Activated naive CD4-positive, alpha-beta T cell treated with anti-CD3 and anti-CD28 coated beads for 36 hours (primary cell): ENCODE measurements at regions of chr7 and their contacts with region 1.

Region 1: GRCh38 chr7:129271500-129272355 is 46.9 kb downstream of the AHCYL2 start:
- DNase-seq: peak; percentile 84
- H3K4me3 Mint-ChIP-seq: peak overlapping the region; percentile 63
- H3K27ac Mint-ChIP-seq: peak overlapping the region; percentile 73
- H3K4me1 Mint-ChIP-seq: peaks cover 9% of the 10 kb centered on the region
- H3K27me3 Mint-ChIP-seq: no peaks in the 10 kb centered on the region

Region 2: DNA sequence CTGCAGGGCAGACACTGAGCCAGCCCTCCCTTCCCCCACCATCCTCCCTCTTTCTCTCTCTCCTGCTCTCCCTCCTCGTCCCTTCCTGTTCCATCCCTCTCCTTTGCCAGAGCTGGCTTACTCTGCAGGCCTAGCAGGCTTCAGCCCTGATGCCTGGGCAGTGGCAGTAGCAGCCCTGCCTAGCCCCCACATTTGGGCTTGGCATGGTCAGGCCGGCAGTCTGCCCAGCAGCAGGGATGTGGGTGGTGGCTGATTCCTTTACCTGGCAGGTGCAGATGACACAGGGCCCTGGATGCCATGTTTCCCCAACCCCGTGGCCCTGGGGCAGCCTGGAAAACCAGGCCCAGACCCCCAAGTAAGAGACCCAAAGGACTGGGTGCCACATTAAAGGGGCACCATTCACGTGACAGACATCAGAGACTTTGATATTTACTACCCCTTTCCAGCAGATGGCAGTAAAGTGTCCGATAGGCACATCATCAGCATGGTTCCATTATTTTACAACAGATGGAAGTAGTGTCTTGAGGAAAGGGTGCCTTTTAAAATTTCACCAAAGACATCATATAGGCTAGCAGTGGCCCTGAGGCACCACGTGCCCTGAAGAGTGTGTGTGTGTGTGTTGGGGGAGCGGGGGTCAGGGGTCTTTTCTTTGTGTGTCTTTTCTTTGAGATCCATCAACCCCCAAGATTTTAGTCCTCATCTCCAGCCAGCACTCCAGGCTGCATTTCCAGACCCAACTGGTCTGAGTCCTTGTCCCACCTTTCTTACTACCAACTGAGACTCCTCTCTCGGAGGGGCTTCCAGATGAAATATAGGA is 367.1 kb before region 1 on chr7:
- CTCF ChIA-PET with region 1: no interaction called
- intact Hi-C with region 1: loop called (anchors 2 kb)
- DNase-seq: peak; percentile 42
- H3K4me3 Mint-ChIP-seq: no peak overlapping the region
- H3K27ac Mint-ChIP-seq: no peak overlapping the region
- H3K4me1 Mint-ChIP-seq: no peaks in the 10 kb centered on the region
- H3K27me3 Mint-ChIP-seq: peaks cover 15% of the 10 kb centered on the region

Region 3: DNA sequence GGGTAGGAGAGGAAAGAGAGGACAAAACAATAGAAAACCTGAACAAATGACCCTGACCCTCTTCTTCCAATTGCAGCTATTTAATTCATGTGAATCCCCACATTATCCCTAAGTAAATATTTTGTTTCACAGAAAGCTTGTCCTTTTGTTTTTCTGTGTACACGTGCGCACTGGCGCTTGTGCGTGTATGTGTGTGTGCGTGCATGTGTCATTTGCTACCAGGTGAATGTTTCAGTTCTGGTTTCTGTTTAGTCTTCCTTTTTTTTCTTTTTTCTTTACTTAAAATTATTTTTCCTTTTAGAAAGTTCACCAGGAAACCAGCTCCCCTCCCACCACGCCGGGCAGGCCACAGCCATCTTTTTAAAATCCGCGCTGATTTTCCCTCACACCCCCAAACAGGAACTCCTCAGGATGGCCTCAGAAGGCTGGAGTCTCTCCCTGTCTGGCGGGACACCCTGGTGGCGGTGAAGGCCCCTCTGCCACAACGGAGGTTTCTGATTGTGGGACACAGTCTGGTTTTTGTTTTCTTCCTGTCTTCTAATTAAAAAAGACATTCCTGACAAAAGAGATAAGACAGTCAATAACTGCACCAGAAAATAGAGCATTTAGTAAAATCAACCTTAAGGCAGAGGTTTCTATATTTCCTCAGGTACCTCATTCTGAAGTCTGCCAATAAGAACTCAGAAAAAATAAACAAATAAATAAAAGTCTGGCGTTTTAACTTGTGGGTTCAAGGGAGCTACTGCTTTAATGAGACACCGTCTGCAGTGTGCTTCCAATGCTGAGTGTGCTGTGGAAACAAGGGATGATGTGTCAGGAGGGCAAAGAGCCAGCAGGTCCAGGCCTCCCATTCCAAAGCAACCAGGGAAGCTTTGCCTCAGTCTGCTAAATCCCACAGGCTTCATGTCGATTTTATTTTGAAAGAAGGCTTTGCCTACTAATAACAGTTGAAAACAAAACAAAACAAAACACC is 316.6 kb before region 1 on chr7:
- CTCF ChIA-PET with region 1: no interaction called
- intact Hi-C with region 1: no loop called
- DNase-seq: no peak
- H3K4me3 Mint-ChIP-seq: no peak overlapping the region
- H3K27ac Mint-ChIP-seq: no peak overlapping the region
- H3K4me1 Mint-ChIP-seq: peaks cover 15% of the 10 kb centered on the region
- H3K27me3 Mint-ChIP-seq: no peaks in the 10 kb centered on the region

Region 4: DNA sequence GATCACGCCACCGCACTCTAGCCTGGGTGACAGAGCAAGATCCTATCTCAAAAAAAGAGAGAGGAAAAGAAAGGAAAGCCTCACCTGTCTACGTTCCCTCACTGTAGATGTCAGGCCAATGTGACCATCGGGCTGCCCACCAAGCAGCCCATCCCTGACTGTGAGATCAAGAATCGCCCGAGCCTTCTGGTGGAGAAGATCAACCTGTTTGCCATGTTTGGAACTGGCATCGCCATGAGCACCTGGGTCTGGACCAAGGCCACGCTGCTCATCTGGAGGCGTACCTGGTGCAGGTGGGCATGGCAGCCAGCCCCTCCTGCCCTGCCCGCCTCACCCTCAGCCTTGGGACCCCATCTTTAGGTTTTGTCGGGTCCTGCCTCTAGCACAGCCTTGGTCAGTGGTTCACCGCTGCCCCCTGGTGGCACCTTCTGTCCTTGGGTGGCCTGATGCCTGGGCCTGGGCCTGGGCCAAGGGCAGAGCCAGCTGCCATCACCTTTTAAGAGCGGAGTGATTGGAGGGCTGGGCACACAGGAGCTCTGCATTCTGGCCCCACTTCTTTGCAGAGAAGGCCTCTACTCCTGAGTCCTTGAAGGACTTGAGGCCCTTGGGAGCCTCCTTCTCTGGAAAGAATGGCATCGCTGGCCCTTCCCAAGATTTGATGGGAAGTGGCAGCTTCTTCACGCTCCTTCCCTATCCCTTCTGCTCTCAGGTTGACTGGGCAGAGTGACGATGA is 61.3 kb before region 1 on chr7:
- CTCF ChIA-PET with region 1: interaction called, 14 read pairs
- intact Hi-C with region 1: no loop called
- DNase-seq: peak; percentile 86
- H3K4me3 Mint-ChIP-seq: no peak overlapping the region
- H3K27ac Mint-ChIP-seq: no peak overlapping the region
- H3K4me1 Mint-ChIP-seq: no peaks in the 10 kb centered on the region
- H3K27me3 Mint-ChIP-seq: no peaks in the 10 kb centered on the region

Region 5: GRCh38 chr7:129231666-129232065 is 40.1 kb before region 1 on chr7:
- CTCF ChIA-PET with region 1: interaction called, 234 read pairs
- intact Hi-C with region 1: no loop called
- DNase-seq: no peak
- H3K4me3 Mint-ChIP-seq: no peak overlapping the region
- H3K27ac Mint-ChIP-seq: no peak overlapping the region
- H3K4me1 Mint-ChIP-seq: peaks cover 15% of the 10 kb centered on the region
- H3K27me3 Mint-ChIP-seq: no peaks in the 10 kb centered on the region

Region 6: DNA sequence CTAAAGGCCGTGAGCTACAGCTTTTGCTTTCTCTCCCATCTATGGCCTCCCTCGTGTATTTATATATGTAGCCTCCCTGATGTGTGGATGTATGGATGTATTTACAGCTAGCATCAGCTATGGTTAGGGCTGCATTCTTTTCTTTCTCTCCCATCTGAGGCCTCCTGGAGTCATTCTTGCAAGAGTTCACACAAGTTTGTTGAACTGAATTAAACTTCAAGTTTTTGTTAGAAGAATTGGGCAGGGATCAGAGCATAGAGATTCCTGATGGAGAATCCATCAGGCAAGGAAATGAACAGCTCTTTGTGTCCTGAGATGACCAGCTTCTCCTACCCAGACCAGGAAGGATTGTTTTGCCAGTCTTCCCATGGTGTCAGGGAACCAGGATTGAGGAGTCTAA is 13.4 kb after region 1 on chr7:
- CTCF ChIA-PET with region 1: interaction called, 16 read pairs
- intact Hi-C with region 1: no loop called
- DNase-seq: no peak
- H3K4me3 Mint-ChIP-seq: no peak overlapping the region
- H3K27ac Mint-ChIP-seq: no peak overlapping the region
- H3K4me1 Mint-ChIP-seq: no peaks in the 10 kb centered on the region
- H3K27me3 Mint-ChIP-seq: no peaks in the 10 kb centered on the region